ENCODE measurements at regions of chr6 and their contacts with region 1.

Region 1: GRCh38 chr6:128600397-128600951 is 80.1 kb upstream of the PTPRK start:
- DNase-seq: peak; percentile 83
- H3K4me3 ChIP-seq: no peak overlapping the region
- H3K27ac ChIP-seq: peak overlapping the region; percentile 67
- H3K4me1 ChIP-seq: peaks cover 22% of the 10 kb centered on the region
- H3K27me3 ChIP-seq: no peaks in the 10 kb centered on the region
- CTCF ChIP-seq: no peak
- POLR2A ChIP-seq: no peak

Region 2: GRCh38 chr6:128339635-128340450 is 260.6 kb before region 1 on chr6:
- CTCF ChIA-PET with region 1: no interaction called
- POLR2A ChIA-PET with region 1: no interaction called
- dilution Hi-C with region 1: no loop called
- intact Hi-C with region 1: loop called (anchors 10 kb)
- DNase-seq: no peak
- H3K4me3 ChIP-seq: no peak overlapping the region
- H3K27ac ChIP-seq: no peak overlapping the region
- H3K4me1 ChIP-seq: no peaks in the 10 kb centered on the region
- H3K27me3 ChIP-seq: no peaks in the 10 kb centered on the region
- CTCF ChIP-seq: no peak
- POLR2A ChIP-seq: no peak

Region 3: DNA sequence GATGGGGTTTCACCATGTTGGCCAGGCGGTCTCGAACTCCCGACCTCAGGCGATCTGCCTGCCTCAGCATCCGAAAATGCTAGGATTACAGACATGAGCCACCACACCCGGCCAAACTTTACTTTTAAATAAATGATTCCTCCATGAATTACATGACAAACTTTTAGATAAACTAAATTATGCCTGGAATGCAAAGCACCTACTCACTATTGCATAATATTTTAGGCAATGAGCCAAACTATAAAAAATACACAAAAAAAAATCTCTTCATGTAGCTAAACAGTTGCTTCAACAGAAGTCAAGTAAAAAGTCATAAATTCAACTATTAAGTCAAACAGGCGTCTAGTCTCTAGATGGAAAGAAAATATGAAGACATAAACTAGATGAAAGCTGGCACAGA is 136.5 kb before region 1 on chr6:
- CTCF ChIA-PET with region 1: no interaction called
- POLR2A ChIA-PET with region 1: no interaction called
- dilution Hi-C with region 1: no loop called
- intact Hi-C with region 1: no loop called
- DNase-seq: peak; percentile 35
- H3K4me3 ChIP-seq: no peak overlapping the region
- H3K27ac ChIP-seq: no peak overlapping the region
- H3K4me1 ChIP-seq: peaks cover 8% of the 10 kb centered on the region
- H3K27me3 ChIP-seq: no peaks in the 10 kb centered on the region
- CTCF ChIP-seq: no peak
- POLR2A ChIP-seq: no peak

Region 4: GRCh38 chr6:128532827-128533226 is 67.6 kb before region 1 on chr6:
- CTCF ChIA-PET with region 1: no interaction called
- POLR2A ChIA-PET with region 1: no interaction called
- dilution Hi-C with region 1: no loop called
- intact Hi-C with region 1: no loop called
- DNase-seq: no peak
- H3K4me3 ChIP-seq: no peak overlapping the region
- H3K27ac ChIP-seq: no peak overlapping the region
- H3K4me1 ChIP-seq: no peaks in the 10 kb centered on the region
- H3K27me3 ChIP-seq: no peaks in the 10 kb centered on the region
- CTCF ChIP-seq: no peak
- POLR2A ChIP-seq: no peak

Region 5: DNA sequence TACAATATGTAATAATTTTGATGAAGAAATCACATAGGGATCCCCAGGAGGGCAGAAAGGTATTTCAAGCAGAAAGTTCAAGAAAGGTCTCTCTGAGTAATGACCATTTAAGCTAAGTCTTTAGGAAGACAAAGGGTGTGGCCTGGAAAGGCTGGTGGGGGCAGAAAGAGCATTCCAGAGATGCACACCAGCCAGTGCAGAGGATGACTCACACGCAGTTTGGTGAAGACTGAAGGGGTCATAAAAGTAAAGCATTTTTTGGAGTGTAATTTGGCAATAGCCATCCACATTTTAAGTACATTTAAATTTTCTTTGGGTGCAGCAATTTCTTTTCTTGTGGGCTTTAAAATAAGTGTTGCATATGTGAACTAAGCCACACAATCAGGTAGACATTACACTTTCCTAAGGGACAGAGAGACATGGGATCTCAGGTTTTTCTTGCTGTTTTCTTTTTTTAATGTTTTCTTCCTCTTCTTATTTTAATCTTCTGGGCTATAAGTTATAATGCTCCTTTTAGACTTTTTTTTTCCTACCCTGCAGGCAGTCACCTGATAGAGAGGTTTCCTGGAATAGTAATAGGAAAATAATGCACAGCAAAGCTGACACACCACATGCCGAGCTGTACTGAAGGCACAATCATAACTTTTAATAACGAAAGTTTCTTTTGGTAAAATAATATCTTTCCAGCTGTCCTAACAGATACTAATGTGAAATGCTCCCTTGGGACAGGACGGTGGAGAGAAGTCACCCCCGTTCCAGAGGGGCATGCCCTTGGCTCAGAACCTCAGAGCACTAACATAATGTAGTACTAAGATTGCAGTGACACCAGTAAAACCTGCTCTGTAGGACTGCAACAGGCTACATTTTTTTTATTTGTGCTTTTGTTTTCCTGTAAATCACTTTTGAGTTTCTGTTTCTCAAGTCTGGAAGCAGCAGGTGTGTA is 30.5 kb before region 1 on chr6:
- CTCF ChIA-PET with region 1: no interaction called
- POLR2A ChIA-PET with region 1: no interaction called
- dilution Hi-C with region 1: no loop called
- intact Hi-C with region 1: no loop called
- DNase-seq: peak; percentile 9
- H3K4me3 ChIP-seq: no peak overlapping the region
- H3K27ac ChIP-seq: no peak overlapping the region
- H3K4me1 ChIP-seq: peaks cover 5% of the 10 kb centered on the region
- H3K27me3 ChIP-seq: no peaks in the 10 kb centered on the region
- CTCF ChIP-seq: no peak
- POLR2A ChIP-seq: no peak

Region 6: GRCh38 chr6:128696663-128697391 is 96.4 kb after region 1 on chr6:
- CTCF ChIA-PET with region 1: no interaction called
- POLR2A ChIA-PET with region 1: no interaction called
- dilution Hi-C with region 1: no loop called
- intact Hi-C with region 1: loop called (anchors 2 kb)
- DNase-seq: peak; percentile 83
- H3K4me3 ChIP-seq: no peak overlapping the region
- H3K27ac ChIP-seq: peak overlapping the region; percentile 60
- H3K4me1 ChIP-seq: peaks cover 34% of the 10 kb centered on the region
- H3K27me3 ChIP-seq: no peaks in the 10 kb centered on the region
- CTCF ChIP-seq: no peak
- POLR2A ChIP-seq: no peak

Measured in endothelial cell of umbilical vein (primary cell).